Panc1 (cell line): ENCODE measurements at regions of chr6 and their contacts with region 1.

Region 1: GRCh38 chr6:122839477-122839876 is 50.4 kb downstream of the SMPDL3A start:
- DNase-seq: peak; percentile 55
- ATAC-seq: peak; percentile 97
- H3K4me3 ChIP-seq: no peak overlapping the region
- H3K27ac ChIP-seq: no peak overlapping the region
- H3K4me1 ChIP-seq: no peaks in the 10 kb centered on the region
- H3K27me3 ChIP-seq: 0 out of 2 replicates have a peak, but pooled peaks cover 2% of the 10 kb centered on the region
- CTCF ChIP-seq: peak; percentile 72

Region 2: DNA sequence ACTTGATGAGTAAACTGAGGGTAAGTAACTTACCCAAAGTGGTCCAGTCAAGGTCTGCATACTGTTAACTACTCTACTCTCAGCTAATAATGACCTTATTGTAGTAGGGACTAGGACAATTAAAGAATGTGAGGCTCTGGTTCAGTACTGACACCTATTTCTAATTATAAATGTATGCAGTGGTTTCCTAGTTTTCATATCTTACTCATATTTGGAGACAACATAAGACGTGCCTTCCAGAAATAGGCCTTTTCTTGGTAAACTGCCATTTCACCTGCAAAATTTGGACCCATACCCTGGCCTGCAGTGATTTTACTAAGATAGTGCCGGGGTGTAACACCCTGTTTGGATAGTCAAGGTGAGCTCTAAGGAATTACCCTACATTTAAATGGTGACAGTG is 1379.3 kb before region 1 on chr6:
- CTCF ChIA-PET with region 1: no interaction called
- POLR2A ChIA-PET with region 1: no interaction called
- in situ Hi-C with region 1: no loop called
- intact Hi-C with region 1: no loop called
- DNase-seq: no peak
- ATAC-seq: no peak
- H3K4me3 ChIP-seq: no peak overlapping the region
- H3K27ac ChIP-seq: no peak overlapping the region
- H3K4me1 ChIP-seq: no peaks in the 10 kb centered on the region
- H3K27me3 ChIP-seq: no peaks in the 10 kb centered on the region
- CTCF ChIP-seq: no peak

Region 3: GRCh38 chr6:122471107-122472021 is 368.1 kb before region 1 on chr6 and contains the start of gene SERINC1:
- CTCF ChIA-PET with region 1: no interaction called
- POLR2A ChIA-PET with region 1: no interaction called
- in situ Hi-C with region 1: no loop called
- intact Hi-C with region 1: loop called (anchors 5 kb)
- DNase-seq: peak; percentile 88
- ATAC-seq: peak; percentile 100
- H3K4me3 ChIP-seq: peak within 1 kb of the TSS; percentile 96 to 99
- H3K27ac ChIP-seq: peak within 1 kb of the TSS; percentile 95
- H3K4me1 ChIP-seq: peaks cover 7% of the 10 kb centered on the region
- H3K27me3 ChIP-seq: no peaks in the 10 kb centered on the region
- CTCF ChIP-seq: no peak
- total RNA-seq, gene SERINC1: 131 TPM

Region 4: GRCh38 chr6:122491919-122492555 is 347.4 kb before region 1 on chr6:
- CTCF ChIA-PET with region 1: interaction called, 6 read pairs
- POLR2A ChIA-PET with region 1: no interaction called
- in situ Hi-C with region 1: no loop called
- intact Hi-C with region 1: loop called (anchors 5 kb)
- DNase-seq: peak; percentile 67
- ATAC-seq: peak; percentile 100
- H3K4me3 ChIP-seq: no peak overlapping the region
- H3K27ac ChIP-seq: no peak overlapping the region
- H3K4me1 ChIP-seq: no peaks in the 10 kb centered on the region
- H3K27me3 ChIP-seq: peaks cover 2% of the 10 kb centered on the region; the same call in 1 of the 2 replicates
- CTCF ChIP-seq: peak; percentile 94

Region 5: DNA sequence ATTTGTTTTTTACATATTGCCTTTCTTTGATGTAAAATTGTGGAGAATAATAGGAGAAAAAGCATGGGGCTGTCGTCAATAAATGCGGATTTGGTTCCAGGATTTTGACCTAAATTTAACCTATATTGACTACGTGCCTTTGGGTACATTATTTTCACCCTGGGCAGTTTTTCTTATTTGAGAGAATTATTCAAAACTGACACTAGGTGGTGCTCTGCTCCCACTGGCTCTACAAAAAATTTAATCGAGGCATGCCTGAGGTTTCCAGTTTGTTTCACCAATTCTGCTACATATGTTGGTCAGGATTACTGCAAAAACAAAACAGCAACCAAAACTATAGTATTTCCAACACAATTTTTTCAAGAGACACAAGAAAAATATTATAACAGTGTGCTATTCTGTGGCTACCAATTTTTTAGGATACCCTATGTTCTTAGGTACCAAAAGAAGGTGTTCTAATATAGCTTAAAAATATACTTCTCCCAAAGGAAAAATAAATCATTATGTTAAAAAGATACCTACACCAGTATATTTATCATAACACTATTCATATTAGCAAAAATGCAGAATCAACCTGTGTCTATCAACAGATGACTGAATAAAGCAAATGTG is 108.6 kb before region 1 on chr6:
- CTCF ChIA-PET with region 1: interaction called, 20 read pairs
- POLR2A ChIA-PET with region 1: no interaction called
- in situ Hi-C with region 1: no loop called
- intact Hi-C with region 1: loop called (anchors 1 kb)
- DNase-seq: peak; percentile 24
- ATAC-seq: no peak
- H3K4me3 ChIP-seq: no peak overlapping the region
- H3K27ac ChIP-seq: no peak overlapping the region
- H3K4me1 ChIP-seq: no peaks in the 10 kb centered on the region
- H3K27me3 ChIP-seq: peaks cover 2% of the 10 kb centered on the region; the same call in 1 of the 2 replicates
- CTCF ChIP-seq: peak; percentile 85; the same call in 1 of the 2 replicates

Region 6: DNA sequence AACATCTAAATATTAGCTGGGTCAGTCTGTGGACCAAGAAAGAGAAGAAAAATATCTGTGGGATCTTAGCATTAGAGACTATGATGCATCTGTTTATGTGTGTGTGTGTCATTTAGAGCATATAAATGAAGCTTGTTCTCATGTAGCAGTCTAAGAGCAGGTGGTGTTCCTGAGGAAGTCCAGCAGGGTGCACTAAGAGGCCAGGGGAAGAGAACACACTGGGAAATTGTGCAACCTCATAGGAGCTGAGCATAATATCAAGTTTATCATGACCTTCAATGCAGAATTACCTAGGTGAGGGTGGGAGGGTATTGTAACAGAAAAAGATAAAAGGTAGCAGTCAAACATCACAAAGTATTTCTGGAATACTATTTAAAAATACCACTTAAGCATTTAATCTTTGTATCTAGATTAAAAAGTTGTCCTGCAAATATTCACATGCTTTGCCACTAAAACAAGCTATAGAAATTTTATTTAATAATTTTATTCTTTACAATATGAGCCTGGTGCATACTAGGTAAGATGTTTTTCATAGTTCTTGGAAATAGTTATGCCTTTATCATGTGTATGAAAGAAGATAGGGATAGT is 30.1 kb after region 1 on chr6:
- CTCF ChIA-PET with region 1: interaction called, 11 read pairs
- POLR2A ChIA-PET with region 1: no interaction called
- in situ Hi-C with region 1: no loop called
- intact Hi-C with region 1: no loop called
- DNase-seq: peak; percentile 55
- ATAC-seq: peak; percentile 95
- H3K4me3 ChIP-seq: no peak overlapping the region
- H3K27ac ChIP-seq: no peak overlapping the region
- H3K4me1 ChIP-seq: no peaks in the 10 kb centered on the region
- H3K27me3 ChIP-seq: no peaks in the 10 kb centered on the region; the same call in 1 of the 2 replicates
- CTCF ChIP-seq: peak; percentile 83